Heart right ventricle (tissue), 16 donors: ENCODE measurements at regions of chr4 and their contacts with region 1.

Region 1: DNA sequence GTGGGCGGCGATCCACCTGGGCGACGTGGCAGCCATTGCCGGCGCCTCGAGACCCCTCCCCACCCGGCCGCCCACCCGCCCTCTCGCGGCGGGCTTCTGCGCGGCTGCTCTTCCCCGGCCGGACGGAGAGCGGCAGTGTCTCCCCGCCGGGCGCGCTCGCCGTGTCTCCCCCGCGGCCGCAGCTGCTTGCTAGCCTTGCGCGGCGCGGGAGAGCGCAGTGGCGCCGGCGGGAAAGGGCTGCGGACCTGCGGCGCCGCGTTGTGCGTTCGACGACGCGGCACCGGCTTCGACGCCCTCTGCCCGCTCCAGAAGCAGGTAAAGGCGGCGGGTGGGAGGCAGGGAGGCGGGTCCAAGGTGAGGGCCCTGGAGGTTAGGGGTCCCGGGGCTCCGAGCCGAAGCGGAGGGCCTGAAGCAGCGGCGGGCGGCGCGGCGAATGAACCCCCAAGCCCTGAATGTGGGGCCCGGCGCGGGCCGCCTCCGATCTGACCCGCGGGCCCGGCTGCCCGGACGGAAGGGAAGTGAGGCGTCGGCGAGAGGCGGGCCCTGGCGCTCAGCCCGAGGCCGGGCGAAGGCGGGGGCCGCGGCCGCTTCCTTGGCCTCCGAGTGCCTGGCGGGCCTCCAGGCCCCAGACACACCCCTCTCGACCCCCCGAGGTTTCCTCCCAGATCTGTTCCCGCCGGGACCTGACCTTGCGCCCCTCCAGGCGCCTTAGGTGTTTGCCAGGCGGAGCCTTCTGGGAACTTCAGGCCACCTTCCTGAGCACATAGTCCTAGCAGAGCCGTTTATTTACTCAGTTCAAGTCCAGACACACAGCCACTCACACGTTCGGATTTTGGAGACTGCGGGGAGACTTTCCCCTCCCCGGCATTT is at the start of gene N4BP2:
- DNase-seq: peak; percentile 81 to 87
- ATAC-seq: peak; percentile 81 to 92 (median 89)
- H3K4me3 ChIP-seq: peak within 1 kb of the TSS; percentile 57 to 99 (median 94)
- H3K27ac ChIP-seq: peak within 1 kb of the TSS; percentile 98 to 100 (median 100)
- H3K4me1 ChIP-seq: peaks cover 0 to 27% (median 15%) of the 10 kb centered on the region in 9 donors
- H3K27me3 ChIP-seq: no peaks in the 10 kb centered on the region
- CTCF ChIP-seq: peak; percentile 46 to 96 (median 79)
- total RNA-seq, gene N4BP2: 3.0 to 6.9 (median 5.4) TPM

Region 2: DNA sequence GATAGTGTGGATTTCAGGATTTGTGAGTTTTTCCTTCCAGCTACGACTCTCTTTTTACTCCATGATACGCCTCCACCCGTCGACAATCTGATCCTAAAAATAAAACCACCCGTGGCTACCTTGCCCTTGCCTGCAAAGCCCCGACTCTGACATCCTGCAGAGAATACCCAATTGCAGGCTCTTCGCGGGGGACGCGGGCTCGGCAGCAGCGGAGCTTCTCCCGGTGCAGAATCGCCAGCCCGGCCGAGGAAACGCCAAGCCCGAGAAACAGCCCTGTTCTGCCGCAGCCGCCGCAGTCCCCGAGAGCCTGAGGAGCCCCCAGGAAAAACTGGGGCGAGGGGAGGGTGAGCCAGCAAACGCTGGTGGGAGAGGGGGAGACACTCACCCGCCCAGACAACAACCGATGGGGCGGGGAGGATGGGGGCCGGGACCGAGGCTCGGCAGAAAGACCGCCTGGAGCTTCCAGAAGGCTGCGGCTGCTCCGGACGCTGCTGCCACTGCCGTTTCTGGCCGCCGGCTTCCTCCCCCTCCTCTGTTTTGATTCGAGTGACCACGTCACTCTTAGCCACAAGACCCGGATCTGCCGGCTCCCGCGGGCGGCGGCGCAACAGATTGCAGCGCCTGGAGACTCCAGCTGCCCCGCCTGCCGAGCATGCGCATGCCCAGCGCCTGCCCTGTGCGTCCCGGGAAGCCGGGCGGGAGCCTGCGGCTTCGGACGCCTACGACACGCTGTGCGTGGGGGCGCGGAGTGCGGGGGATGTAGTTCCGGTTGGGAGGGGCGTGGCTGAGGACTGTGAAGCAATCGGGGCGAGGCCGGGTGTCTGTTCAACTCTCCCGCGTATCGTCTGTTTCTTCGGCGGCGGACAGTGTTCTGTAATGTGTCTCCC is 418.4 kb before region 1 on chr4 and contains the start of gene SMIM14:
- intact Hi-C with region 1: loop called in 3 of 10 experiments (anchors 2 to 5 kb)
- DNase-seq: peak; percentile 98 to 99
- ATAC-seq: peak; percentile 97 to 100 (median 98)
- H3K4me3 ChIP-seq: peak within 1 kb of the TSS; percentile 80 to 95 (median 92)
- H3K27ac ChIP-seq: peak within 1 kb of the TSS; percentile 86 to 99 (median 98)
- H3K4me1 ChIP-seq: peaks cover 0 to 35% (median 27%) of the 10 kb centered on the region in 9 donors
- H3K27me3 ChIP-seq: no peaks in the 10 kb centered on the region
- CTCF ChIP-seq: peak in 4 of 9 donors; percentile 24 to 35 (median 27)
- total RNA-seq, gene SMIM14: 9.3 to 15.2 (median 11.8) TPM

Region 3: GRCh38 chr4:40309250-40309774 is 252.4 kb after region 1 on chr4:
- intact Hi-C with region 1: loop called in 8 of 10 experiments (anchors 5 to 10 kb)
- DNase-seq: peak; percentile 86 to 88
- ATAC-seq: peak; percentile 80 to 92 (median 89)
- H3K4me3 ChIP-seq: peak overlapping the region in 1 of 10 donors; percentile 16
- H3K27ac ChIP-seq: peak overlapping the region in 1 of 10 donors; percentile 84
- H3K4me1 ChIP-seq: peaks cover 0 to 57% (median 0%) of the 10 kb centered on the region in 9 donors
- H3K27me3 ChIP-seq: peaks cover 0 to 9% (median 0%) of the 10 kb centered on the region in 7 donors
- CTCF ChIP-seq: peak; percentile 59 to 95 (median 91)

Region 4: GRCh38 chr4:40316782-40317635 is 260.1 kb after region 1 on chr4:
- intact Hi-C with region 1: loop called in 1 of 10 experiments (anchors 5 kb)
- DNase-seq: peak in 1 of 2 donors; percentile 39
- ATAC-seq: peak; percentile 54 to 87 (median 72)
- H3K4me3 ChIP-seq: peak overlapping the region in 8 of 10 donors; percentile 4 to 47 (median 32)
- H3K27ac ChIP-seq: peak overlapping the region in 6 of 10 donors; percentile 16 to 79 (median 36)
- H3K4me1 ChIP-seq: peaks cover 0 to 20% (median 9%) of the 10 kb centered on the region in 9 donors
- H3K27me3 ChIP-seq: peaks cover 0 to 5% (median 0%) of the 10 kb centered on the region in 7 donors
- CTCF ChIP-seq: peak; percentile 58 to 86 (median 79)